ENCODE measurements at regions of chr12 and their contacts with region 1.

Region 1: GRCh38 chr12:89470741-89471509 is 53.7 kb downstream of the GALNT4 start:
- DNase-seq: no peak
- ATAC-seq: peak; percentile 70
- H3K4me3 Mint-ChIP-seq: no peak overlapping the region
- H3K27ac Mint-ChIP-seq: no peak overlapping the region
- H3K4me1 Mint-ChIP-seq: peaks cover 49% of the 10 kb centered on the region
- H3K27me3 Mint-ChIP-seq: no peaks in the 10 kb centered on the region
- CTCF ChIP-seq: no peak

Region 2: DNA sequence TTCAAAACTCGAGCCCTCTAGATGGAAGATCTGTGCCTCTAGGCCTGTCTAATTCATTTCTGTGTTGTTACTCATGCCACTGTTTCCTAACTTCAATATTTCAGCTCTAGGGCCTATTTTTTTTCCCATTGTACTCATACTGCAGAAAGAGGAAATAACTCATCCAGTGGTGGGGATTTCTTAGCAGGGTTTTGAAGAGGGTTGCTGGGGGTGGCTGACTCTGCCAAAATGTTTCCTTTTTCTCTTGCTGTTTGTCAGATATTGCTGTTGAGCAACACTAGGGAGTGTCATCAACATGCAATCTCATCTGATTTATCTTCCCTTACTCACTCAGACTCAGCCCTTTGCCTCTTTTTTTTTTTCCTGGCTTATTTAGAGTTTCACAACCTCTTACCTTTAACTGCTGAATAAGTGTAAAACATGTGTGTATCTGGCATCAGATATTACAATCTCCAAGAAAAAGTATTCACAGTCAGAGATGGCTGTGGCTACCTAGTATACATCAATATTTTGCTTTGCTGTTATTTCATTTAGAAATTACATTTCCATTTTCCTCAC is 308.1 kb before region 1 on chr12:
- CTCF ChIA-PET with region 1: no interaction called
- POLR2A ChIA-PET with region 1: no interaction called
- intact Hi-C with region 1: loop called (anchors 2 kb)
- DNase-seq: no peak
- ATAC-seq: peak; percentile 56
- H3K4me3 Mint-ChIP-seq: no peak overlapping the region
- H3K27ac Mint-ChIP-seq: no peak overlapping the region
- H3K4me1 Mint-ChIP-seq: peaks cover 28% of the 10 kb centered on the region
- H3K27me3 Mint-ChIP-seq: no peaks in the 10 kb centered on the region
- CTCF ChIP-seq: no peak

Region 3: DNA sequence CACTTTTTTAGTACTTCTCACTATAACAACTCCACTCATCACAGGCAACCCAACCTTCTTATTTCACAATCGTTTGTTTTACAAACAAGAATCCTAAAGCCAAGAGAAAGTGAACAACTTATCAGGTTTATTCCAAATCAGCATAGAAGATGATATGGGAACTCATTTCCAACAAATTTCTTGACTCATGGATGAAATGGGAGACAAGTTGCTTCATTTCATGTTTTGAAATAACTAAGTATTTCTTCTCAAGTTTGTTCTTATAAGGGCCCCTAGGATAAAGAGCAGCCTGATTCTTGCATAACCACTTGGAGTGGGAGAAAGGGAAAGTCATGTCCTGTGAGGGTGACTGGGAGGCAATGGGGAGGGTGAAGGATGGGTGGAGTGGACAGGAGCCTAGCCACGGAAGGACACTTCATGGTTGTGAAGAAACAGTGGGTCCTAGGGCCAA is 286.9 kb before region 1 on chr12:
- CTCF ChIA-PET with region 1: no interaction called
- POLR2A ChIA-PET with region 1: no interaction called
- intact Hi-C with region 1: no loop called
- DNase-seq: no peak
- ATAC-seq: no peak
- H3K4me3 Mint-ChIP-seq: no peak overlapping the region
- H3K27ac Mint-ChIP-seq: no peak overlapping the region
- H3K4me1 Mint-ChIP-seq: no peaks in the 10 kb centered on the region
- H3K27me3 Mint-ChIP-seq: peaks cover 3% of the 10 kb centered on the region
- CTCF ChIP-seq: no peak

Region 4: DNA sequence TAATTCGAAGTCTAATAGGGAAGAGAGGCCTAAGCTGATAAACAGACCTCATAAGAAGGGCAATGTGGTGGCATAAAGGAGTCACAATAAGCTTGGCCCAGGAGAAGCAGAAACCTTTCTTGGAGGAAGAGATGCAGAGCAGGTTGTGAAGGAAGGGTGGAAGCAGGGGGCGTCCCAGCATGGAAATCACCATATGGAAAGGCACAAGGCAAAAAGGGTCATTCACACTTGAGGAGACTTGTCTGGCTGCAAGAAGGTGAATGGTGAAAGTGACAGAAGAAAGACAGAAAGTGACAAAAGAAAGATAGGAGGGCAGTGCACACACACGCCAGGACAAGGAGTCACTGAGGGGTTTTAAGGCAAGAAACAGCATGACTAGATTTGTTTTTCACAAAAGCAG is 15.3 kb after region 1 on chr12:
- CTCF ChIA-PET with region 1: no interaction called
- POLR2A ChIA-PET with region 1: no interaction called
- intact Hi-C with region 1: no loop called
- DNase-seq: no peak
- ATAC-seq: no peak
- H3K4me3 Mint-ChIP-seq: no peak overlapping the region
- H3K27ac Mint-ChIP-seq: no peak overlapping the region
- H3K4me1 Mint-ChIP-seq: no peaks in the 10 kb centered on the region
- H3K27me3 Mint-ChIP-seq: no peaks in the 10 kb centered on the region
- CTCF ChIP-seq: no peak

Region 5: DNA sequence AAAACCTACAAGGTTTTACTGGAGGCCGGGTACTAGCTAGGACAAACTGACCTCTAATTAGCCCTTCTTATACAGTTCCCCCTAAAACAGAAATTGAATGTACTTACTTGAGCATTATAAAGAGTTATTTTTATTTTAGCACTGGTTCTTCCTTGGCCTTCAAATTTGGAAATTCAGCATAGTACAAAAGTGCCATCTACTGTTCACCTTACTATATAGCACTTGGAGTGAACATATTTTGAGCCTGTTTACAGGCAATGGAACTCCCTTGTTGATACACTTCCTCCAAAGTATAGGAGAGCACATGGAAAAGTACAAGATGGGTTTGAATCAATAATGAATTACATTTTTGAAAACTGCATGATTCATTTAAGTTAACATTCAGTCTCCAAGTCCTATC is 58.8 kb after region 1 on chr12:
- CTCF ChIA-PET with region 1: interaction called, 15 read pairs
- POLR2A ChIA-PET with region 1: interaction called, 4 read pairs
- intact Hi-C with region 1: loop called (anchors 1 kb)
- DNase-seq: no peak
- ATAC-seq: peak; percentile 18
- H3K4me3 Mint-ChIP-seq: no peak overlapping the region
- H3K27ac Mint-ChIP-seq: peak overlapping the region; percentile 9
- H3K4me1 Mint-ChIP-seq: peaks cover 21% of the 10 kb centered on the region
- H3K27me3 Mint-ChIP-seq: no peaks in the 10 kb centered on the region
- CTCF ChIP-seq: peak; percentile 15

Region 6: DNA sequence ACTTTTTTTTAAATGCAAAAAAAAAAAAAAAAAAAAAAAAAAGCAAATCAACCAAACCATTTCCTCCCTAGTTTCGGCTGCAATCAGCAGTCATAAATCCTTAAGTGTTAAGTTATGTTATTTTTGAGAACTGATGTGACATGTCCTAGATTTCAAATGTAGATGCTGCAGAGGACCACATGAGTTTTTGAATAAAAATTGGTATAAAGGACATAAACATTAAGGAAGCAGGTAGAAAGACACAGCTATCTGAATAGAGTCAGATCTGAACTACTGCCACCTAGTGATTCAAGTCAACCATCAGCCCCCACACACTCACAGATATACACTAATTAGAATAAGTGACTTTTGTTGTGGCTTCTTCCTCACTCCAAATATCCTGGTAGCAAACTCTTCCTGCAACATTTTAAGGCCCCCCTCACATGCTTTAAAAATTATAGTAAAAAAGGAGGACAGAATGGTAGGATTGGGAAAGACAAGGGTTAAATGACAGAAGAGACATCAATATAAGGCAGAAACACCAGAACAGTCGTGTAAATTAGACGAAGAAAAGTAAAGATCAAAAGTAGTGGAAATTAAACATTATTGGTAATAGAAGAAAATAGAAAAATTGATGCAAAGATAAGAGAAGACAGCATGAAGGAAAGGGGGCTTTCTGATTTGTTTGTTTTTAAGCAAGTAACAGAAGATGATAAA is 632.2 kb after region 1 on chr12:
- CTCF ChIA-PET with region 1: interaction called, 3 read pairs
- POLR2A ChIA-PET with region 1: no interaction called
- intact Hi-C with region 1: loop called (anchors 5 kb)
- DNase-seq: no peak
- ATAC-seq: peak; percentile 75
- H3K4me3 Mint-ChIP-seq: peak overlapping the region; percentile 66
- H3K27ac Mint-ChIP-seq: peak overlapping the region; percentile 43
- H3K4me1 Mint-ChIP-seq: peaks cover 29% of the 10 kb centered on the region
- H3K27me3 Mint-ChIP-seq: no peaks in the 10 kb centered on the region
- CTCF ChIP-seq: no peak

Region 7: DNA sequence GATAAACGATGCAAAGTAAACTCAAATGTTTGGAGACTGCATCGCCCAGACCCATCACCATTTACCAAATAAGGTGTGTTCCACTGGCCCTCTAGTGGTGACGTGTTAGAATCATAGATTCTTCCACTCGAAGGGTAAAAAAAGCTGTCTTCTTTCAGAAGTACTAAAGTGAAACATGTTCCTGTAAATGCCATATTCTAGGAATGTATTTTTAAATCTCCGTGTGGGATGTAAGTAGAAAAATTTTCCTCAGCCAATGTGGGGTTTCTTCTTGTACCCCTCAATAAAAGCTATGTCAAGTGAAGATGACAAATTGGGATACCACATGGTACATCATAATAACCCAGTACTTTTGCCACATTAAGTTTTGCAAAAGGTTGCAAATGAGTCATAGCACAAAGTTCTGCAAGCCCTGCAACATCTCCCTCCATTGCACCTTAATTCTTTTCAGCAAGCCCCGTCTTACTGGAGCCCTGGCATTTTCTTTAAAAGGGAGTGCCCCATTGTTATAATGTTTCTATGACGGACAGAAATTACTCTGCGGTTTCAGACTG is 1383.3 kb after region 1 on chr12:
- CTCF ChIA-PET with region 1: no interaction called
- POLR2A ChIA-PET with region 1: no interaction called
- intact Hi-C with region 1: loop called (anchors 5 kb)
- DNase-seq: no peak
- ATAC-seq: no peak
- H3K4me3 Mint-ChIP-seq: no peak overlapping the region
- H3K27ac Mint-ChIP-seq: no peak overlapping the region
- H3K4me1 Mint-ChIP-seq: no peaks in the 10 kb centered on the region
- H3K27me3 Mint-ChIP-seq: no peaks in the 10 kb centered on the region
- CTCF ChIP-seq: peak; percentile 30

Region 8: GRCh38 chr12:90940872-90941499 is 1470.1 kb after region 1 on chr12:
- CTCF ChIA-PET with region 1: no interaction called
- POLR2A ChIA-PET with region 1: no interaction called
- intact Hi-C with region 1: loop called (anchors 2 kb)
- DNase-seq: no peak
- ATAC-seq: peak; percentile 28
- H3K4me3 Mint-ChIP-seq: no peak overlapping the region
- H3K27ac Mint-ChIP-seq: no peak overlapping the region
- H3K4me1 Mint-ChIP-seq: no peaks in the 10 kb centered on the region
- H3K27me3 Mint-ChIP-seq: peaks cover 12% of the 10 kb centered on the region
- CTCF ChIP-seq: peak; percentile 36

Measured in activated B cell treated with CpG ODN at 0.5 μM for 24 hours (primary cell).